IMR-90 (cell line): ENCODE measurements at regions of chr5 and their contacts with region 1.

Region 1: DNA sequence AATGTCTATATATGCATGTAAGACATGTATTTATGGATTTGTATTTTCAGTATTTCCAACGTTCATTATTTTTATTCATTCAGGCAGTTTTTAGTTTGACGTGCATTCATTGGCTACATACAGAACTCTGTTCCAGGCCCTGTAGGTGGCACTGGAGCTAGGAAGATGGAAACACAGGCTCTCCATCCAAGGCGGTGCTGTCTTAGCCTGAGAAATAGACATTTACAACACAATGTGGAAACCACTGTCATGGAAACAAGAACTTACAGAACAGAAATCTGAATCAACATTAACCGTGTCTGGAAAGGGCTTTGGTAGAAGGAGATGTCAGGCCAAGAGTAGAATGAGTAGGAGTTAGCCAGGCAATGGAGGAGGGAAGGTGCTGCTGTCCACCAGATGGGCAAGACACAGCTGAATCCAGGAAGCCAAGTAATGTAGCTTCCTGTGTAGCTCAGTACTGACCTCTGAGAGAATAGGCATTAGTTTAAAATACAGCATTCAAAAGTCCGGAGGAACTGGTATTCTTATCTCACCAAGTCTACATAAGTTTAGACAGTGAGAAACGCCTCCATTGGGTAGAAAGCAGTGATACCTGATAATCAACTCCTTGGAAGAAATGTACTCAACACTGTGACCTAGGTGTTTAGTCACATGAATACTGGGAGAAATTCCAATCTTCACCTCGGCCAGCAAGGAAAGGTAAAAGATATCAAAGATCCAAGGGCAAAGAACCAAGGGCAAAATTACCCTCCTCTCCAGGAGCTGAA is 388.6 kb upstream of the CDH6 start:
- DNase-seq: peak; percentile 62
- ATAC-seq: peak; percentile 80
- H3K4me3 ChIP-seq: no peak overlapping the region
- H3K27ac ChIP-seq: no peak overlapping the region
- H3K4me1 ChIP-seq: no peaks in the 10 kb centered on the region; the same call in 1 of the 2 replicates
- H3K27me3 ChIP-seq: no peaks in the 10 kb centered on the region
- CTCF ChIP-seq: peak; percentile 56
- POLR2A ChIP-seq: no peak
- RAD21 ChIP-seq: peak; percentile 69

Region 2: GRCh38 chr5:31186672-31187267 is 381.8 kb after region 1 on chr5:
- CTCF ChIA-PET with region 1: no interaction called
- POLR2A ChIA-PET with region 1: no interaction called
- dilution Hi-C with region 1: no loop called
- in situ Hi-C with region 1: no loop called
- intact Hi-C with region 1: loop called (anchors 2 kb)
- DNase-seq: peak; percentile 59
- ATAC-seq: peak; percentile 66; the same call in 1 of the 2 replicates
- H3K4me3 ChIP-seq: no peak overlapping the region
- H3K27ac ChIP-seq: no peak overlapping the region
- H3K4me1 ChIP-seq: no peaks in the 10 kb centered on the region
- H3K27me3 ChIP-seq: no peaks in the 10 kb centered on the region
- CTCF ChIP-seq: peak; percentile 66
- POLR2A ChIP-seq: no peak
- RAD21 ChIP-seq: peak; percentile 73

Region 3: GRCh38 chr5:31232273-31232888 is 427.5 kb after region 1 on chr5:
- CTCF ChIA-PET with region 1: interaction called, 11 read pairs
- POLR2A ChIA-PET with region 1: no interaction called
- dilution Hi-C with region 1: no loop called
- in situ Hi-C with region 1: no loop called
- intact Hi-C with region 1: loop called (anchors 2 kb)
- DNase-seq: peak; percentile 74
- ATAC-seq: peak; percentile 90
- H3K4me3 ChIP-seq: no peak overlapping the region
- H3K27ac ChIP-seq: no peak overlapping the region
- H3K4me1 ChIP-seq: peaks cover 4% of the 10 kb centered on the region; the same call in 1 of the 2 replicates
- H3K27me3 ChIP-seq: no peaks in the 10 kb centered on the region
- CTCF ChIP-seq: peak; percentile 92
- POLR2A ChIP-seq: no peak
- RAD21 ChIP-seq: peak; percentile 95

Region 4: GRCh38 chr5:31487506-31487905 is 682.6 kb after region 1 on chr5:
- CTCF ChIA-PET with region 1: no interaction called
- POLR2A ChIA-PET with region 1: no interaction called
- dilution Hi-C with region 1: no loop called
- in situ Hi-C with region 1: no loop called
- intact Hi-C with region 1: loop called (anchors 5 kb)
- DNase-seq: peak; percentile 11
- ATAC-seq: no peak
- H3K4me3 ChIP-seq: no peak overlapping the region
- H3K27ac ChIP-seq: no peak overlapping the region
- H3K4me1 ChIP-seq: peaks cover 4% of the 10 kb centered on the region; the same call in 1 of the 2 replicates
- H3K27me3 ChIP-seq: no peaks in the 10 kb centered on the region
- CTCF ChIP-seq: peak; percentile 47
- POLR2A ChIP-seq: no peak
- RAD21 ChIP-seq: peak; percentile 53